ENCODE measurements at regions of chr19 and their contacts with region 1.

Region 1: GRCh38 chr19:7919610-7920518 is at the start of gene SNAPC2:
- DNase-seq: peak; percentile 97
- ATAC-seq: peak; percentile 63
- H3K4me3 Mint-ChIP-seq: peak within 1 kb of the TSS; percentile 93
- H3K27ac Mint-ChIP-seq: peak within 1 kb of the TSS; percentile 96
- H3K4me1 Mint-ChIP-seq: peaks cover 49% of the 10 kb centered on the region
- H3K27me3 Mint-ChIP-seq: peaks cover 17% of the 10 kb centered on the region
- CTCF ChIP-seq: no peak
- total RNA-seq, gene SNAPC2: 14.4 and 15.3 TPM in 2 replicates

Region 2: GRCh38 chr19:7535035-7535992 is 384.6 kb before region 1 on chr19 and contains the start of gene PNPLA6:
- CTCF ChIA-PET with region 1: no interaction called
- POLR2A ChIA-PET with region 1: interaction called, 3 read pairs
- intact Hi-C with region 1: loop called (anchors 10 kb)
- DNase-seq: peak; percentile 95
- ATAC-seq: peak; percentile 75
- H3K4me3 Mint-ChIP-seq: peak within 1 kb of the TSS; percentile 94
- H3K27ac Mint-ChIP-seq: peak within 1 kb of the TSS; percentile 91
- H3K4me1 Mint-ChIP-seq: peaks cover 32% of the 10 kb centered on the region
- H3K27me3 Mint-ChIP-seq: no peaks in the 10 kb centered on the region
- CTCF ChIP-seq: no peak
- total RNA-seq, gene PNPLA6: 110 and 116 TPM in 2 replicates

Region 3: GRCh38 chr19:7629347-7630054 is 290.4 kb before region 1 on chr19 and contains the starts of genes PET100 and XAB2:
- CTCF ChIA-PET with region 1: no interaction called
- POLR2A ChIA-PET with region 1: interaction called, 14 read pairs
- intact Hi-C with region 1: no loop called
- DNase-seq: peak; percentile 88
- ATAC-seq: peak; percentile 98
- H3K4me3 Mint-ChIP-seq: peak within 1 kb of the TSS; percentile 98
- H3K27ac Mint-ChIP-seq: peak within 1 kb of the TSS; percentile 98
- H3K4me1 Mint-ChIP-seq: peaks cover 37% of the 10 kb centered on the region
- H3K27me3 Mint-ChIP-seq: no peaks in the 10 kb centered on the region
- CTCF ChIP-seq: no peak
- total RNA-seq, gene PET100: 109 and 123 TPM in 2 replicates
- total RNA-seq, gene XAB2: 47.4 and 51.8 TPM in 2 replicates

Region 4: GRCh38 chr19:7829561-7830271 is 90.1 kb before region 1 on chr19 and contains the start of gene EVI5L:
- CTCF ChIA-PET with region 1: no interaction called
- POLR2A ChIA-PET with region 1: interaction called, 4 read pairs
- intact Hi-C with region 1: loop called (anchors 1 kb)
- DNase-seq: peak; percentile 100
- ATAC-seq: peak; percentile 83
- H3K4me3 Mint-ChIP-seq: peak within 1 kb of the TSS; percentile 86
- H3K27ac Mint-ChIP-seq: peak within 1 kb of the TSS; percentile 80
- H3K4me1 Mint-ChIP-seq: peaks cover 23% of the 10 kb centered on the region
- H3K27me3 Mint-ChIP-seq: no peaks in the 10 kb centered on the region
- CTCF ChIP-seq: no peak
- total RNA-seq, gene EVI5L: 9.2 and 12.8 TPM in 2 replicates

Region 5: DNA sequence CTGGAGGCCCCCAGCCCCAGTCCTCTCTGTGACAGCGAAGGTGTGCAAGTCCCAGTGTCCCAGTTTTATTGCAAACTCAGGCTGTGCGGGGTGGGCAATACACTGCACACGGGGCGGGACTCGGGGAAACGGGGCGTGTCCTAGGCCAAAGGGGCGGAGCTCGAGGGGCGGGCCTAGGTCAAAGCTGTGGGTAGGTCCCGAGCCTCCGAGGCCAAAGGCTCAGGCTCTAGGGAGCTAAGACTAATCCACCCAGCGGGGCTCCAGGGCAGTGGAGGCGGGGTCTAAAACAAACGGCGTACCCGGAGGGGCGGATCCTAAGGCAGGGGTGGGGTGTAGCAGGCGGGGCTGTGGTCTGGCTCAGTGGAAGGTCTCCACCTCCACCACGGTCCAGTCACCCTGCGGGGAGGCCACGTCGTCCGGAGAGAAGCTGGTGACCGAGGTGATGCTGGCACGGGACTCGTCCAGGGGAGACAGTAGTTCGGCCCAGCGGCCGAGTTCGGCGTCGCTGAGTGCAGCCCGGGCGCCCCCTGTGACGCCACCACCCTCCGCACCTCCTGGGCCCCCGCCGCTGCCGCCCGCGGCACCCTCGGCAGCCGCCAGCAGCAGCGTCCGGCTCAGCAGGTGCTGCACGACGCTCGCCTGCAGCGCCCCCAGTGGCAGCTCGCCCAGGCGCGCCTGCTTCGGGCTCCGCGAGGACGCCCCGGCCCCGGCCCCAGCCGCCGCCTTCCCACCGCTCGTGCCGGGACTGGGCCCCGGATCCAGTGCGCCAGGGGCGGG is 51.0 kb before region 1 on chr19:
- CTCF ChIA-PET with region 1: interaction called, 8 read pairs
- POLR2A ChIA-PET with region 1: interaction called, 15 read pairs
- intact Hi-C with region 1: loop called (anchors 1 kb)
- DNase-seq: peak; percentile 83
- ATAC-seq: peak; percentile 75
- H3K4me3 Mint-ChIP-seq: peak overlapping the region; percentile 81
- H3K27ac Mint-ChIP-seq: peak overlapping the region; percentile 73
- H3K4me1 Mint-ChIP-seq: peaks cover 41% of the 10 kb centered on the region
- H3K27me3 Mint-ChIP-seq: peaks cover 30% of the 10 kb centered on the region
- CTCF ChIP-seq: peak; percentile 56

Region 6: GRCh38 chr19:8389891-8390616 is 470.2 kb after region 1 on chr19 and contains the start of gene RAB11B:
- CTCF ChIA-PET with region 1: no interaction called
- POLR2A ChIA-PET with region 1: interaction called, 3 read pairs
- intact Hi-C with region 1: loop called (anchors 1 kb)
- DNase-seq: peak; percentile 92
- ATAC-seq: peak; percentile 88
- H3K4me3 Mint-ChIP-seq: peak within 1 kb of the TSS; percentile 95
- H3K27ac Mint-ChIP-seq: peak within 1 kb of the TSS; percentile 94
- H3K4me1 Mint-ChIP-seq: peaks cover 27% of the 10 kb centered on the region
- H3K27me3 Mint-ChIP-seq: no peaks in the 10 kb centered on the region
- CTCF ChIP-seq: no peak
- total RNA-seq, gene RAB11B: 92.1 and 100 TPM in 2 replicates

Measured in activated B cell treated with CpG ODN at 0.5 μM for 24 hours (primary cell).